ENCODE measurements at regions of chr1 and their contacts with region 1.

Region 1: DNA sequence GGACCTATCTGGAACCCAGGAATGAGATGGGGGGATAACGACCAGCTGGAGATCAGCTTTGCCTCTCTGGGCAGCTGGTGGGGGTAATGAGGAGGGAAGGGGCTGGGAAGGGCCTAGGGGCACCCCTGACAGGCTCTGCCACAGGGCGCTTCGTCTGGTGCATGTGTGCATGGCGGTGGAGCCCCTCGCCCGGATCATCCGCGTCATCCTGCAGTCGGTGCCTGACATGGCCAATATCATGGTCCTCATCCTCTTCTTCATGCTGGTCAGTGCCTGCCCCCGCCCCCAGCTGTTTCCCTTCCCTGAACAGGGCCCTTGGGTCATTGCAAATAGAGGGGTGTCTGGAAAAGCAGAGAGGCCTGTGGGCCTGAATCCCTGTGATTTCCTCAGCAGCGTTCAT is 7.4 kb downstream of the CATSPER4 start:
- DNase-seq: no peak
- H3K4me3 ChIP-seq: no peak overlapping the region
- H3K27ac ChIP-seq: no peak overlapping the region
- H3K4me1 ChIP-seq: no peaks in the 10 kb centered on the region
- H3K27me3 ChIP-seq: no peaks in the 10 kb centered on the region
- CTCF ChIP-seq: no peak
- POLR2A ChIP-seq: no peak

Region 2: GRCh38 chr1:25971066-25971810 is 226.6 kb before region 1 on chr1:
- intact Hi-C with region 1: loop called (anchors 5 kb)
- DNase-seq: no peak
- H3K4me3 ChIP-seq: no peak overlapping the region
- H3K27ac ChIP-seq: no peak overlapping the region
- H3K4me1 ChIP-seq: no peaks in the 10 kb centered on the region
- H3K27me3 ChIP-seq: no peaks in the 10 kb centered on the region
- CTCF ChIP-seq: no peak
- POLR2A ChIP-seq: no peak

Measured in breast epithelium (tissue), 4 donors.